IMR-90 (cell line): ENCODE measurements at regions of chr3 and their contacts with region 1.

Region 1: DNA sequence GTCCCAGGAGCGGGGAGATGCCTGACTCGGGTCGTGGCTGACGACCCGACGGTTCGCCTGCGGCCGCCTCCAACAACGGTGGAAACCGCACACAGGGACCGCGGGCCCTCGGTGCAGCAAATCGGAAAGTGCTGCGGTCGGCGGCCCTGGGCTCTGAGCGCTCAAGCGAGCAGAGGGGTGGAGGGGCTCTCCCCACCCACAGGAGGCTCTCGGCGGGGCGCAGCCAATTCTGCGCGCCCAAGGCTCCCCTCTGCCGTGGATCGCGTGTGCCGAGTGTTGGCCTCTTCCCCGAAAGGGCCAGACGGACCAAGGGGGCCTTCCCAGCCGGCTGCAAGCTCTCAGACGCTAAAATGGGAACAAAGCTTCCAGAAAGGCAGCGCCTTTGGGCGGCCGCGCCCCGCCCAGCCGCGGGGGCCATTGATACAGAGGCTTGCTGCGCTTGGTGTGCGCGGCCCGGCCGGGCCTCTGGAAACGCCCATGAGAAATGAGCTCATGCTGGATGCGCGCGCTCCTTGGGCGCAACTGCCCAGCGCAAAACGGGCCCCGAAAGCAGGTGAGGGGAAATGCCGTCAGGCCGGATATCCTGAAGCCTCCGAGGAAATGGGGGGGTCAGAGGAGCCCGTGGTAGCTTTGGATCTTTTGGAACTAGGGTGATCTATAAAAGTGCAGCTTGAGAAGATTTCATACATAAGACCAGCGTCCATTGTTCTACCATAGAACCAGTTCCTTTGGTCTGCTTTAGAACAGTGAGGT is 1.2 kb upstream of the GSK3B start:
- DNase-seq: peak; percentile 89
- ATAC-seq: peak; percentile 52
- H3K4me3 ChIP-seq: peak overlapping the region; percentile 66
- H3K27ac ChIP-seq: peak overlapping the region; percentile 94
- H3K4me1 ChIP-seq: peaks cover 5% of the 10 kb centered on the region
- H3K27me3 ChIP-seq: no peaks in the 10 kb centered on the region
- CTCF ChIP-seq: no peak
- POLR2A ChIP-seq: peak; percentile 94
- RAD21 ChIP-seq: no peak

Region 2: DNA sequence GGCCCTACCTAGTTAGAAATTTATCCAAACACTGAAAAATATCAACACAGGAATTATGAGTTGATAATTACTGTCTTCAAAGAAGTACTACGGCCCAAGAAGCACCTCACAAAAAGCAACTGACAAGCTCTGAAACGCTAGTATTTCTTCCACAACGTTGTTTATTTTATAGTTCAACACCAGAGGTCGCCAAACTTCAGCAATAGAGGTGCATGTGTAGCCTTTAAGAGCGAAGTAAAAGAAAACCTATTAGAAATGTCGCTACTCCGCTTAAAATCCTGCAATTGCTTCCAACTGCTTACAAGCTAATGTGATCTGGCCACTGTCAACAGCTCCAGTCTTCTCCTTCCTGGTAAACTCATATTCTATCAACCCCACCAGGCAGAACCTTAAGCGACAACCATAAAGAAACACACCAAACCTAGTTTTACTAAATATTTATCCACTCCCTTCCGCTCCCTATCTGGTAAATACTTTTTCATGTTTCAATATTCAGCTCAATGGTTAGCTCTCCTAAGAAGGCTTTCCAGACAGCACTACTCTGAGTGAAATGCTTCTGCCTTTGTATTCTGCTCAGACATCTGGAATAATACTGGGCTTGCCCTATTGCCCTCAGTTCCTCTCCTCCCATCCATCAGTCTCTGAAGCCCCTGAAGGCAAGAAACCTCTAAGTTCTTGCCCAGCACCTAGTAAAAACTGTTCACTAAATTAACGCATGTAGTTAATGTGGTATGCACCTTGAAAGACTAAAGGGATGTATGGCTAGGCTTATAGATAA is 203.3 kb before region 1 on chr3:
- CTCF ChIA-PET with region 1: interaction called, 4 read pairs
- POLR2A ChIA-PET with region 1: no interaction called
- dilution Hi-C with region 1: no loop called
- in situ Hi-C with region 1: no loop called
- intact Hi-C with region 1: loop called (anchors 1 kb)
- DNase-seq: peak; percentile 71
- ATAC-seq: peak; percentile 70; the same call in 1 of the 2 replicates
- H3K4me3 ChIP-seq: no peak overlapping the region
- H3K27ac ChIP-seq: no peak overlapping the region
- H3K4me1 ChIP-seq: no peaks in the 10 kb centered on the region
- H3K27me3 ChIP-seq: no peaks in the 10 kb centered on the region
- CTCF ChIP-seq: peak; percentile 77
- POLR2A ChIP-seq: no peak
- RAD21 ChIP-seq: peak; percentile 89

Region 3: GRCh38 chr3:120021523-120021922 is 73.9 kb before region 1 on chr3:
- CTCF ChIA-PET with region 1: no interaction called
- POLR2A ChIA-PET with region 1: no interaction called
- dilution Hi-C with region 1: no loop called
- in situ Hi-C with region 1: no loop called
- intact Hi-C with region 1: no loop called
- DNase-seq: peak; percentile 57
- ATAC-seq: no peak; the same call in 1 of the 2 replicates
- H3K4me3 ChIP-seq: no peak overlapping the region
- H3K27ac ChIP-seq: no peak overlapping the region
- H3K4me1 ChIP-seq: peaks cover 2% of the 10 kb centered on the region; the same call in 1 of the 2 replicates
- H3K27me3 ChIP-seq: no peaks in the 10 kb centered on the region
- CTCF ChIP-seq: no peak
- POLR2A ChIP-seq: no peak
- RAD21 ChIP-seq: no peak

Region 4: GRCh38 chr3:120177151-120177550 is 81.7 kb after region 1 on chr3:
- CTCF ChIA-PET with region 1: interaction called, 3 read pairs
- POLR2A ChIA-PET with region 1: interaction called, 11 read pairs
- dilution Hi-C with region 1: no loop called
- in situ Hi-C with region 1: loop called (anchors 5 kb)
- intact Hi-C with region 1: loop called (anchors 1 kb)
- DNase-seq: peak; percentile 81
- ATAC-seq: peak; percentile 95
- H3K4me3 ChIP-seq: no peak overlapping the region; the same call in 1 of the 2 replicates
- H3K27ac ChIP-seq: peak overlapping the region; percentile 89
- H3K4me1 ChIP-seq: peaks cover 15% of the 10 kb centered on the region
- H3K27me3 ChIP-seq: no peaks in the 10 kb centered on the region
- CTCF ChIP-seq: no peak
- POLR2A ChIP-seq: no peak
- RAD21 ChIP-seq: no peak; the same call in 1 of the 2 replicates

Region 5: DNA sequence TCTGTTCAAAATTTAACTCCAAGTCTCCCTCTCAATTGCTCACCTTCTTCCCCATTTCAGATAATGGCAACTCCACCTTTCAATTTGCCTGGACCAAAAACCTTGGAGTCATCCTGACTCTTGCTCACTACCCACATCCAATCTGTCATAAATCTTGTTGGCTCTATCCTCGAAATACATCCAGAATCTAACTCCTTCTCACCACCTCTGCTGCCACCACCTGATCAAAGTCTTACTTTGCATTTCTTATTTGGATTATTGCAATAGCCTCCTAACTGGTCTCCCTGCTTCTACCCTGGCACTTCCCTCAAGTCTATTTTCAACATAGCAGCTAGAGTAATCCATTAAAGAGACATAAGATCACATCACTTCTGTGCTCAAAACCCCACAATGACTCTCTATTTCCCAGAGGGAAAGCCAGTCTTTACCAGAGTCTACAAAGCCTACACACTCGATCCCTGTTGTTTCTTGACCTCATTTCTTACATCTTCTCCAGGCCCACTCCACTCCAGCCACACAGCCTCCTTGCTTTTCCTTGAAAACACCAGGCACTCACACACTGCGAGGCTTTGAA is 103.0 kb after region 1 on chr3:
- CTCF ChIA-PET with region 1: no interaction called
- POLR2A ChIA-PET with region 1: no interaction called
- dilution Hi-C with region 1: no loop called
- in situ Hi-C with region 1: no loop called
- intact Hi-C with region 1: loop called (anchors 5 kb)
- DNase-seq: peak; percentile 41
- ATAC-seq: peak; percentile 66
- H3K4me3 ChIP-seq: no peak overlapping the region
- H3K27ac ChIP-seq: no peak overlapping the region
- H3K4me1 ChIP-seq: peaks cover 2% of the 10 kb centered on the region; the same call in 1 of the 2 replicates
- H3K27me3 ChIP-seq: no peaks in the 10 kb centered on the region
- CTCF ChIP-seq: peak; percentile 45
- POLR2A ChIP-seq: no peak
- RAD21 ChIP-seq: peak; percentile 60

Region 6: DNA sequence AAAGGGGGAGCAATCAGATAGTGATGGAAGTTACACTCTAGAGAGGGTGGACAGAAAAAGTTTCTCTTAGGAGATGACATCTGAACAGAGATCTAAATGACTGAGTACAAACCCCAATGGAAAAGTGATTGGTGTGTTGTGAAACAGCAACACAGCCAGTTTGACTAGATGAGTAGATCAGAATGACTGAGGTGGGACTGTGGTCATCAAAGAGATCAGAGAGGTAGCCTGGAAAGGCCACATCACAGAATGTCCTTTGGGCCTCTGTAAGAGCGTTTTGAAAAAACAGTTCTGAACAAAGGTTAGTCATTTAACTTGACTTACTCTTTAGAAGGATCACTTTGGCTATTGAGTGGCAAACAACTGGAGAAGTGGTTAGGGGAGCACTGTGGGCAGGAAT is 243.1 kb after region 1 on chr3:
- CTCF ChIA-PET with region 1: no interaction called
- POLR2A ChIA-PET with region 1: no interaction called
- dilution Hi-C with region 1: no loop called
- in situ Hi-C with region 1: no loop called
- intact Hi-C with region 1: no loop called
- DNase-seq: no peak
- ATAC-seq: no peak
- H3K4me3 ChIP-seq: no peak overlapping the region
- H3K27ac ChIP-seq: no peak overlapping the region
- H3K4me1 ChIP-seq: 0 out of 2 replicates have a peak, but pooled peaks cover 2% of the 10 kb centered on the region
- H3K27me3 ChIP-seq: no peaks in the 10 kb centered on the region
- CTCF ChIP-seq: no peak
- POLR2A ChIP-seq: no peak
- RAD21 ChIP-seq: no peak